ENCODE measurements at regions of chrX and their contacts with region 1.

Region 1: DNA sequence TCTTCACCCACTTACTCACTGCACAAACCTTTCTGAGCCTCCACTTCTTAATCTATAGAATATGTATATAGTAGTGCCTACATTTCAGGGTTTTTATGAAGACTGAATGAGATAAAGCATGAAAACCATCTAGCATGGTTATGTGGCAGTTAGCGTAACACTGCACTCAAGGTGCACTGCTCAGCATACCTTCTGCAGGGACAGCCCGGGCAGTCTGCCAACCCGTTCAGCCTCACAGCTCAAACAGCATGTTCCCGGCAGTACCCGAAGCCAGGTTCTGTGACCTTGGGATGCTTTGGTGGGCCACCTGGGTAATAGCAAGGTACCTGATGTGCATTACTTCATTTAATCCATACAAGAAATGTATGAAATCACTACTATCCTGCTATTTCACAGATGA is 81.4 kb downstream of the DOCK11 start:
- DNase-seq: no peak

Region 2: GRCh38 chrX:118459494-118459893 is 117.5 kb before region 1 on chrX:
- in situ Hi-C with region 1: loop called (anchors 25 kb)
- DNase-seq: peak; percentile 68